PC-9 (cell line): ENCODE measurements at regions of chr22 and their contacts with region 1.

Region 1: GRCh38 chr22:33302049-33302545 is 243.9 kb upstream of the SYN3 start:
- DNase-seq: peak; percentile 43 to 71
- H3K4me3 ChIP-seq: no peak overlapping the region
- H3K27ac ChIP-seq: no peak overlapping the region
- H3K4me1 ChIP-seq: no peaks in the 10 kb centered on the region
- H3K27me3 ChIP-seq: peaks cover 13% of the 10 kb centered on the region; the same call in 1 of the 2 replicates
- CTCF ChIP-seq: peak; percentile 97

Region 2: GRCh38 chr22:33472462-33473344 is 170.6 kb after region 1 on chr22:
- CTCF ChIA-PET with region 1: no interaction called
- POLR2A ChIA-PET with region 1: no interaction called
- intact Hi-C with region 1: loop called (anchors 10 kb)
- DNase-seq: no peak
- H3K4me3 ChIP-seq: no peak overlapping the region
- H3K27ac ChIP-seq: no peak overlapping the region
- H3K4me1 ChIP-seq: peaks cover 9% of the 10 kb centered on the region
- H3K27me3 ChIP-seq: no peaks in the 10 kb centered on the region
- CTCF ChIP-seq: no peak

Region 3: DNA sequence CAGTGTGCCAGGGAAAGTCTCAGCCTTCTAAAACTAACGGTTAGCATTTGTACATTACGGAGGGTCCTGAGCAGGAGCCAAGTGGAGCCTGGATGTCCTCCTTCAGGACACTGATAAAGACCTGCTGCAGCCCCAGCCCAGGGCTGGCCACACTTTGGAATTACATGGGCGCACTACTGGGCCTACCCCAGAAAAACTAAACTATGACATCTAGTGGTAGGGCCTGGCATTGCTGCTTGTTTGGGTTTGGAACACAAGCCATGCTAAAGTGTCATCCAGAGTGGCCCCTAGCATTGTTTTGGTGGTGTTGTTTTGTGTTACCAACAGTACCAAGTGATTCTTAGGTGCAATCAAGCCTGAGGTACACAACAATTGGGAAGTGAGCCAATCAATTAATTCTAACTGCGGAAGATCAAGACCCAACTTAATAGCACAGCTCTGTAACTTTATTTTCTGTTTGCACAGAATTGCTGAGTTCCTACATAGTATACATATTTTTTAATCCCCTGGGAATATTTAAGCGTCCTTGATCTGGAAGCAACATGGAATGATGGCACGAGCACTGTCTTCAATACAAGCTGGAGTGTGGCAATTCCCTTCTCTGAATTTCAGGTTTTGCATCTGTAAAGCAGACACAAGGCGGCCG is 277.5 kb after region 1 on chr22:
- CTCF ChIA-PET with region 1: no interaction called
- POLR2A ChIA-PET with region 1: no interaction called
- intact Hi-C with region 1: loop called (anchors 1 kb)
- DNase-seq: peak in 1 of 2 experiments; percentile 53
- H3K4me3 ChIP-seq: no peak overlapping the region
- H3K27ac ChIP-seq: no peak overlapping the region
- H3K4me1 ChIP-seq: no peaks in the 10 kb centered on the region
- H3K27me3 ChIP-seq: no peaks in the 10 kb centered on the region
- CTCF ChIP-seq: peak; percentile 93

Region 4: GRCh38 chr22:33747576-33748180 is 445.6 kb after region 1 on chr22:
- CTCF ChIA-PET with region 1: no interaction called
- POLR2A ChIA-PET with region 1: no interaction called
- intact Hi-C with region 1: no loop called
- DNase-seq: peak in 1 of 2 experiments; percentile 5
- H3K4me3 ChIP-seq: no peak overlapping the region
- H3K27ac ChIP-seq: no peak overlapping the region
- H3K4me1 ChIP-seq: no peaks in the 10 kb centered on the region
- H3K27me3 ChIP-seq: no peaks in the 10 kb centered on the region
- CTCF ChIP-seq: no peak

Region 5: GRCh38 chr22:35023692-35024363 is 1721.7 kb after region 1 on chr22:
- CTCF ChIA-PET with region 1: no interaction called
- POLR2A ChIA-PET with region 1: no interaction called
- intact Hi-C with region 1: loop called (anchors 5 kb)
- DNase-seq: peak; percentile 44 to 56
- H3K4me3 ChIP-seq: no peak overlapping the region
- H3K27ac ChIP-seq: no peak overlapping the region
- H3K4me1 ChIP-seq: no peaks in the 10 kb centered on the region
- H3K27me3 ChIP-seq: peaks cover 23% of the 10 kb centered on the region; the same call in 1 of the 2 replicates
- CTCF ChIP-seq: peak; percentile 99

Region 6: DNA sequence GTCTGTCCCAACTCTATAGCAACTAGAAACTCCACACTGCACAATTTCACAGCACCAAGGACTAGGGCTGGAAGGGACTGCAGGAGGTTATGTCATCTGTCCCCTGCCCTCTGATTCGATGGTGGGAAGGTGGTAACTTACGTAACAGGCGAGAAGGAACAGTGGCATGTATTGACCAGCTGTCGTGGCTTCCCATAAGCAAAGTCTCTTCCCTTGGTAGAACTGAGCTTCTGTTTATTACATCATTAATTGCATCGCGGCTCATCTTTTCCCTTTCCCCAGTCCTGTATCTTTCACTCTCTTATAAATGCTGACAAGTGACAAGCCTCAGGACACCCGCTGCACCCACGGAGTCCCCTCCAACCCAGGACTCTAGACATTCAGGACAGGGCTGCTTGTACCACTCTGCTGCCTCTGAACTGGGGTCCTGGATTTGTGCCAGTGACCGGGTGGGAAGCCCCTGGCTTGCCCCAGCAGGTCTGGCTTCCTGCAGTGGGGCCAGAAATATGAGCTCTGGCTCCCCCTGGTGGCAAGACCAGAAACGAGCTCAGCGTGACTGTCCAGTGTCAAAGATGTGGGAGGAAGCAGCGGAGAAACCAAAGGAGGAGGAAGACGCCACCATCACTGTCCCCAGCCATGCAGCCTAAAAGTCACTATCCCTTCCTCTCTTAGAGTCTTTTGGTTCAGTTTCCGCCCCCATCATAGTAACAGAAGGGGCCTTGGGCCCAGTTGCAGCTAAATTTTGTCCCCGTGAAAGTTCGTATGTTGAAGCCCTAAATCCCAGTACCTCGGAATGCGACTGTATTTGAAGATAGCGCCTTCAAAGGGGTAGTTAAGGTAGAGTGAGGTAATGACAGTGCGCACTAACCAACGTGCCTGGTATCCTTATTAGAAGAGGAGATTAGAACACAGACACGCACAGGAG is 1848.3 kb after region 1 on chr22:
- CTCF ChIA-PET with region 1: interaction called, 12 read pairs
- POLR2A ChIA-PET with region 1: no interaction called
- intact Hi-C with region 1: no loop called
- DNase-seq: peak in 1 of 2 experiments; percentile 53
- H3K4me3 ChIP-seq: no peak overlapping the region
- H3K27ac ChIP-seq: no peak overlapping the region
- H3K4me1 ChIP-seq: no peaks in the 10 kb centered on the region
- H3K27me3 ChIP-seq: peaks cover 43% of the 10 kb centered on the region
- CTCF ChIP-seq: peak; percentile 91